ENCODE measurements at regions of chr1 and their contacts with region 1.

Region 1: GRCh38 chr1:32400876-32401631 is 6.8 kb upstream of the BSDC1 start:
- DNase-seq: peak; percentile 63
- H3K4me3 ChIP-seq: no peak overlapping the region
- H3K27ac ChIP-seq: no peak overlapping the region
- H3K4me1 ChIP-seq: no peaks in the 10 kb centered on the region
- H3K27me3 ChIP-seq: no peaks in the 10 kb centered on the region
- CTCF ChIP-seq: peak; percentile 94 to 95

Region 2: DNA sequence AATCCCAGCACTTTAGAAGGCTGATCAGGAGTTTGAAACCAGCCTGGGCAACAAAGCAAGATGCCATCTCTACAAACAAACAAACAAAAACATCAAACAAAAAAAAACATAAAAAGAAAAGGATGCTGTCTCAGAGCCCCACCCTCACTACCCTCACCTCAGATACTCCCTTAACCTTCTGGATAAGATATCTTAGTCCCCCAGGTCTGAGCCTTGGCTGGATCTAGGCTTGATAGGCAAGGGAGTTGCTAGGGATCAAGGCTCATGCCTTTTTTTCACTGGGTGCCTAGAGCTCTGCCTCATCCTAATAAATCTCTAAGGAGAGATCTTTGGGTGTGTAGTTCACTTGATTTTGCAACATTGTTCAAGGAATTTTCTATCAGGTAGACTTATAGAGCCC is 101.7 kb before region 1 on chr1:
- CTCF ChIA-PET with region 1: no interaction called
- dilution Hi-C with region 1: no loop called
- in situ Hi-C with region 1: no loop called
- intact Hi-C with region 1: no loop called
- DNase-seq: no peak
- H3K4me3 ChIP-seq: no peak overlapping the region
- H3K27ac ChIP-seq: no peak overlapping the region
- H3K4me1 ChIP-seq: peaks cover 8% of the 10 kb centered on the region
- H3K27me3 ChIP-seq: no peaks in the 10 kb centered on the region
- CTCF ChIP-seq: no peak

Region 3: DNA sequence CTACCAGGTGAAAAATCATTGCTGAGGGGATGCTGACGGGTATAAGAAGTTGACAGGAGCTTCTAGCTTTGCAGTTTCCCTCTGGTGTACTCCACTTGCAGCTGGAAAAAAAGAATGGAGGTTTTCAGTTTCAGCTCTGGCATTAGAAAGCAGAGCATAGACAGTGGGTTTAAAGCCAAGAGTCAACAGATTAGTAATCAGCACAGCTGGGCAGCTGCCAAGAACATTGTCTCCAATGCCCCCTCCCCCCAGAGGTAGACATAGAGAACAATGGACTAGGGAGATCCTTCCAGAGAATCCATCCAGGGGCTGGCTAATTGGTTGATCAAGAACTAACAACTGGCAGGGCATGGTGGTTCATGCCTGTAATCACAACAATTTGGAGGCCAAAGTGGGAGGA is 53.7 kb after region 1 on chr1:
- CTCF ChIA-PET with region 1: no interaction called
- dilution Hi-C with region 1: no loop called
- in situ Hi-C with region 1: no loop called
- intact Hi-C with region 1: no loop called
- DNase-seq: peak; percentile 30
- H3K4me3 ChIP-seq: no peak overlapping the region
- H3K27ac ChIP-seq: no peak overlapping the region
- H3K4me1 ChIP-seq: no peaks in the 10 kb centered on the region
- H3K27me3 ChIP-seq: no peaks in the 10 kb centered on the region
- CTCF ChIP-seq: no peak

Region 4: GRCh38 chr1:32500387-32501209 is 99.5 kb after region 1 on chr1:
- CTCF ChIA-PET with region 1: no interaction called
- dilution Hi-C with region 1: no loop called
- in situ Hi-C with region 1: no loop called
- intact Hi-C with region 1: loop called (anchors 10 kb)
- DNase-seq: peak; percentile 63
- H3K4me3 ChIP-seq: peak overlapping the region; percentile 55 to 78 (median 77)
- H3K27ac ChIP-seq: no peak overlapping the region
- H3K4me1 ChIP-seq: peaks cover 3% of the 10 kb centered on the region
- H3K27me3 ChIP-seq: no peaks in the 10 kb centered on the region
- CTCF ChIP-seq: peak in 1 of 2 donors; percentile 18

Region 5: DNA sequence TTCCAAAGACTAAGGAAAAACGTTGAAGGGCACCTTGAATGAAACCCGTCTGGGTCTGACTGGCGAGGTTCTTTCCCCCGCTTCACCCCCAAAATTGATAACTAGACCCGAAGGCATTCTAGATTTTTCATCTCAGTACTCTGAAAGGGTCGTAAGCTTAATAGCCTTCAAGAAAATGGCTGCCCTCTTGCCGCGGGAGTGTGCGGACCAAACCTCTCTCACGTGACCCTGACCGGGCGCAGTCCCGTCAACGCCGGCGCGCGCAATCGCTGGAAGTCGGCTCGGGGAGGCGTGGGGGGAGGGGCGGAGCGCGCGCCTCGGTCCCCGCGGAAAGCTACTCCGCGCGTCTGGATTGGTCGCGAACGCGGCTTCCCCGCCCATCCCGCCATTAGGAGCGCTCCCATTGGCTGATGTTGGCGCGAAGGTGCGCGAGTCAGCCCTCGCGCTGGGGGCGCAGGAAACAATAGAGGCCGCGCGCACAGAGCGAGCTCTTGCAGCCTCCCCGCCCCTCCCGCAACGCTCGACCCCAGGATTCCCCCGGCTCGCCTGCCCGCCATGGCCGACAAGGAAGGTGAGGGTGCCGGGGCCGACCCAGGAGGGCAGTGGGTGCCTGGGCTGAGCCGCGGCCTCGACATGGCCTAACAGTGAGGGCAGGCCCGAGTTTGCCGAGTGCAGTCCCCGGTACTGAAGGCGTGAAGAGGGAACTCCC is 249.9 kb after region 1 on chr1 and contains the start of gene RBBP4:
- CTCF ChIA-PET with region 1: no interaction called
- dilution Hi-C with region 1: no loop called
- in situ Hi-C with region 1: no loop called
- intact Hi-C with region 1: loop called (anchors 5 kb)
- DNase-seq: peak; percentile 98
- H3K4me3 ChIP-seq: peak within 1 kb of the TSS; percentile 94 to 99 (median 99)
- H3K27ac ChIP-seq: peak within 1 kb of the TSS; percentile 99
- H3K4me1 ChIP-seq: peaks cover 20% of the 10 kb centered on the region
- H3K27me3 ChIP-seq: no peaks in the 10 kb centered on the region
- CTCF ChIP-seq: no peak
- total RNA-seq, gene RBBP4: 108 to 110 TPM

Region 6: GRCh38 chr1:32870615-32871363 is 469.7 kb after region 1 on chr1 and contains the start of gene FNDC5:
- CTCF ChIA-PET with region 1: no interaction called
- dilution Hi-C with region 1: no loop called
- in situ Hi-C with region 1: no loop called
- intact Hi-C with region 1: loop called (anchors 1 kb)
- DNase-seq: no peak
- H3K4me3 ChIP-seq: peak within 1 kb of the TSS in 2 of 3 experiments; percentile 30 to 40
- H3K27ac ChIP-seq: no peak within 1 kb of the TSS
- H3K4me1 ChIP-seq: no peaks in the 10 kb centered on the region
- H3K27me3 ChIP-seq: peaks cover 8% of the 10 kb centered on the region
- CTCF ChIP-seq: no peak
- total RNA-seq, gene FNDC5: not detected